Aorta (tissue), 5 donors: ENCODE measurements at regions of chr2 and their contacts with region 1.

Region 1: DNA sequence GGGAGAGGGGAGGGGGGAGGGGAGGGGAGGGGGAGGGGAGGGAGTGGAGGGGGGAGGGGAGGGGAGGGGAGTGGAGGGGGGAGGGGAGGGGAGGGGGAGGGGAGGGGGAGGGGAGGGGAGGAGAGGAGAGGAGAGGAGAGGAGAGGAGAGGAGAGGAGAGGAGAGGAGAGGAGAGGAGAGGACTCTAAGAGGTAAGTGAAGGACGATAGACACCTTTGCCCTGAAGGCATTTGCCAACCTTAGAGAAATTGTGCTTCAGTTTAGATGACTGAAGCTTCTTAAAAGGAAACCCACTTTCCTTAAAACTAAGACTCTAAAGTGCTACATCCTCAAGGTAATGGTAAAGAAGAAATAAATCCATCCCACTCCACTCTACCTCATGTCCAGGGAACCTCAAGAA is 19.2 kb downstream of the GPR75 start:
- DNase-seq: no peak
- ATAC-seq: no peak
- H3K4me3 ChIP-seq: no peak overlapping the region
- H3K27ac ChIP-seq: no peak overlapping the region
- H3K4me1 ChIP-seq: no peaks in the 10 kb centered on the region
- H3K27me3 ChIP-seq: no peaks in the 10 kb centered on the region

Region 2: DNA sequence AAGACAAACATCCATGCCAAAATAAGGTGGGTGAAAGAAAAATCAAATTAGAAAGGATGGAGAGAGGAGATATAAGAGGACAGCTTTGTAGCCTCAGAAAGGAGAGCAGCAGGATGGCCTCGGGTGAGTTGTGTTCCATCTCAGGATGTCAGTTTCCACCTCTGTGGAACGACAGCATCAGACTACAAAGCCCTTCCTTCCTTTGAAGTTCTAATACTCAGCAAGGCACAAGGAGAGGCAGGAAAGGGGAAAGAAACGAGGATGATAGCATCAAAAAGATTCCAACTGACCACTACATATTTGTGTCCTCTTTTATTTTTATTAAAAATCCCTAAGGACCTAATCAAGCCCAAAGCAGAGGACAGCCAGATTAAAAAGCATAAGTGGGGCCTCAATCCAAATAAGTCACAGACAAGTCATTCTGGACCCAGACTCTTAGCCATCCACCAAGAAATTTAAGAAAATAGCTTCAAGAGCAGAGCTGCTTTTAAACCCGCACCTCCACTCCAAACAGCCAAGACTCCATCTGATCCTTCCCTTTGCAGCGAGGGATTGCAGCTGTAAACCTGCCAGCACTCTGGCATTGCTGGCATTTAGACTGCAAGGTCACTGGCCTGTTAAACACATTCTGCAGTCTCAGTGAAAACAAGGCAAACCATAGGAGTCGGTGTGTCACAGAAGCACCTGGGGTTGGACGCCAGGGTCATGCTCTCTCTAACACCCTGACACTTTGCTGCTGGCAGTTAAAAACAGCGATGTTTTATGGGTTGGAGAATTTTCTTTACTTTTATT is 387.4 kb before region 1 on chr2:
- intact Hi-C with region 1: no loop called
- DNase-seq: peak in 1 of 2 donors; percentile 49
- ATAC-seq: peak; percentile 47
- H3K4me3 ChIP-seq: no peak overlapping the region
- H3K27ac ChIP-seq: peak overlapping the region; percentile 43 to 65
- H3K4me1 ChIP-seq: peaks cover 0 to 4% of the 10 kb centered on the region in 2 donors
- H3K27me3 ChIP-seq: no peaks in the 10 kb centered on the region

Region 3: GRCh38 chr2:53708988-53709387 is 131.6 kb before region 1 on chr2:
- intact Hi-C with region 1: no loop called
- DNase-seq: no peak
- ATAC-seq: no peak
- H3K4me3 ChIP-seq: no peak overlapping the region
- H3K27ac ChIP-seq: no peak overlapping the region
- H3K4me1 ChIP-seq: no peaks in the 10 kb centered on the region
- H3K27me3 ChIP-seq: no peaks in the 10 kb centered on the region

Region 4: DNA sequence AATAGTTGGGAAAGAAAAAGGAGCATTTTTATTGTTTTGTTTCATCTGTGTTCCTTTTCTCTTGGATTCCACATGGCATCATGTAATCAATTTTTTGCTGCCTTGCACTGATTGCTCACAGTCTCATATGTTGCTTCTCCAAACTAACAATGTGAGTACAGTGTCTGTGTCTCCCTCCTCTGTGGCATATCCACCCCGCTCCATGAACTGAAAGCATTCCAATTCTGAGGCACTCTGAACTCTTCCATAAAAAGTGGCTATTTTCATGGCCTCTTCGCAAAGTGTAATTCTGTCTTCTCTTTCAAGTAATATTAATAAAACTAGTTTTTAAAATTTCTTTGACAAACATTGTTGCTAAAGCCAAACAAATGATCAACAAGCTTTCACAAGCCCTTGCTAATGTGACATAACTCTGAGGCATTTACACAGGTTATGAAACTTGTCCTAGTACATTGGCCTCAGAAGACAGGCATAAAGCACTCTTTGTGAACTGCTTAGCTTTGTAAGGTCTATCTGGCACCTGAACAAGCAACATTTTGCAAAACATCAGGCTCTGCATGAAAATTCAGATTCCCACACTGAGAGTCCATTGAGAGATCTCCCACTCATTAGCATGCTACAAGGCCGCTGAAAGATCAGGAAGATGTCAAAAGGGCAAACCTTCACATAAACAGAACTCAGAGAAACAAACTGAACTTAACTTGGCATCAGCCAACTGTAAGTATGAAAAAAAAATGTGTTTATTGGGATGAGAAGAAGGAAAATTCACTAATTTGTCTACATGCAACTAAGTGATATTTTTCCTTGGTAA is 13.8 kb before region 1 on chr2:
- intact Hi-C with region 1: loop called in 1 of 2 experiments (anchors 1 kb)
- DNase-seq: no peak
- ATAC-seq: no peak
- H3K4me3 ChIP-seq: no peak overlapping the region
- H3K27ac ChIP-seq: no peak overlapping the region
- H3K4me1 ChIP-seq: no peaks in the 10 kb centered on the region
- H3K27me3 ChIP-seq: no peaks in the 10 kb centered on the region